ENCODE measurements at regions of chr17 and their contacts with region 1.

Region 1: DNA sequence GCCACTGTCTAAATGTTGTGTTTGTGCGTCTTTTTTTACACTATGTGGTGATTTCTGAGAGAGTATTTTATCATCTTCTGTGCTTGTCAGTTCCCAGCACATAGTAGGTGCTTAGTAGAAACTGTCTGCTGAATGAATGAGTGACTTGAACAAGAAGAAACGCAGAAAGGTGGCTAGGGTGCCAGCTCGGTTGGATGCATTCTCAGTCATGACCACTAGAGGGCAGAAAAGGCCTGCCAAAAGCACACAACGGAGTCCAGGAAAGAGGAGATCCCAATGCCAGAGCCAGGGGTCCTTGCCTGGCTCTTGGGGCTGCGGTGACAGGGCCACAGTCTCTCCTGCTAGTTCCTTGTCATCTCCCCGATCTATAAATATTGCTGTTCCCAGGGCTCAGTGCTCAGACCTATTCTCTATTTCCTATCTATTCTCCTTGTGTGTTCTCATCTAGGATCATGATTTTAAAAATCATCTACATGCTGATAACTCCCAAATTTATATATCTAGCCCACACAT is 57.3 kb upstream of the CCL1 start:
- DNase-seq: peak; percentile 73
- H3K4me3 Mint-ChIP-seq: no peak overlapping the region
- H3K27ac Mint-ChIP-seq: no peak overlapping the region
- H3K4me1 Mint-ChIP-seq: peaks cover 3% of the 10 kb centered on the region
- H3K27me3 Mint-ChIP-seq: peaks cover 25% of the 10 kb centered on the region

Region 2: DNA sequence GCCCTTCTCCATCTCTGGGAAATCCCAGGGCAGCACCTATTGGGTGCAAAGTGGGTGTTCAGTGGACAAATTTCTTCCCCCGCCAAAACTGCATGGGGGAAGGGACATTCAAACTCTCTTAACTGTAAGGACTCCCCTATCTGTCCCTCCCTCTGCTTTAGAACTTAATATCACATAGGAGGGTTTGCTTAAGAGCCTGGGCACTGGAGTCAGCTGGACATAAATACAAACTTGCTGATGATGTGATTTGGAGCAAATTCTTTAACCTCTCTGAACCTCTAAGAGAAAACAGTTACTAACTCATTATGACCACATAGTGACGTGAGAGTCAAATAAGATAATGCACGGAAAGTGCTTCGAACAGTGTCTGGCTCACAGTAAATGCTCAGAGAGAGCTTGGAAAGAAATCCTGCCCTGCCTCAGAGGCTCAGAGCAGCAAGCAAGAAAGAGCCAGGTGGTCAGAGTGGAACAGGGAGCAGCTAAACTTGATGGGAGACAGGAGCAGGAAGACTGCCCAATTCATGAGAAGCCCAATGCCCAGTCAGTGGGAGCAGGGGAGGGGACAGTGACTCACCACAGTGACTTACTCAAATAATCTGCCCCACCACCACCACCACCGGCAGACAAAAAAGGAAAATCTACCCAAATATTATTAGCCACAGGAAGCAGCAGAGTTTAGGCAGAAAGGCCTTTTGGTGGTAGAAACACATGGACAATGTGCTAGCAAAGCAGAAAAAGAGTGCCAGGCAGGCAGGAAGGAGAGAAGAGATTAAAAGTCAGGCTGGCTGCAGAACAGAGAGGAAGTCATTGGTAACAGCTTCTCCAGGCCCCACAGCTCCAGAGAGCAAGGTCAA is 33.4 kb before region 1 on chr17:
- CTCF ChIA-PET with region 1: interaction called, 10 read pairs
- POLR2A ChIA-PET with region 1: no interaction called
- intact Hi-C with region 1: no loop called
- DNase-seq: no peak
- H3K4me3 Mint-ChIP-seq: no peak overlapping the region
- H3K27ac Mint-ChIP-seq: no peak overlapping the region
- H3K4me1 Mint-ChIP-seq: peaks cover 19% of the 10 kb centered on the region
- H3K27me3 Mint-ChIP-seq: peaks cover 29% of the 10 kb centered on the region

Region 3: GRCh38 chr17:34637548-34638525 is 217.5 kb after region 1 on chr17:
- CTCF ChIA-PET with region 1: interaction called, 14 read pairs
- POLR2A ChIA-PET with region 1: no interaction called
- intact Hi-C with region 1: loop called (anchors 5 kb)
- DNase-seq: peak; percentile 87
- H3K4me3 Mint-ChIP-seq: peak overlapping the region; percentile 61
- H3K27ac Mint-ChIP-seq: no peak overlapping the region
- H3K4me1 Mint-ChIP-seq: peaks cover 8% of the 10 kb centered on the region
- H3K27me3 Mint-ChIP-seq: peaks cover 8% of the 10 kb centered on the region

Region 4: DNA sequence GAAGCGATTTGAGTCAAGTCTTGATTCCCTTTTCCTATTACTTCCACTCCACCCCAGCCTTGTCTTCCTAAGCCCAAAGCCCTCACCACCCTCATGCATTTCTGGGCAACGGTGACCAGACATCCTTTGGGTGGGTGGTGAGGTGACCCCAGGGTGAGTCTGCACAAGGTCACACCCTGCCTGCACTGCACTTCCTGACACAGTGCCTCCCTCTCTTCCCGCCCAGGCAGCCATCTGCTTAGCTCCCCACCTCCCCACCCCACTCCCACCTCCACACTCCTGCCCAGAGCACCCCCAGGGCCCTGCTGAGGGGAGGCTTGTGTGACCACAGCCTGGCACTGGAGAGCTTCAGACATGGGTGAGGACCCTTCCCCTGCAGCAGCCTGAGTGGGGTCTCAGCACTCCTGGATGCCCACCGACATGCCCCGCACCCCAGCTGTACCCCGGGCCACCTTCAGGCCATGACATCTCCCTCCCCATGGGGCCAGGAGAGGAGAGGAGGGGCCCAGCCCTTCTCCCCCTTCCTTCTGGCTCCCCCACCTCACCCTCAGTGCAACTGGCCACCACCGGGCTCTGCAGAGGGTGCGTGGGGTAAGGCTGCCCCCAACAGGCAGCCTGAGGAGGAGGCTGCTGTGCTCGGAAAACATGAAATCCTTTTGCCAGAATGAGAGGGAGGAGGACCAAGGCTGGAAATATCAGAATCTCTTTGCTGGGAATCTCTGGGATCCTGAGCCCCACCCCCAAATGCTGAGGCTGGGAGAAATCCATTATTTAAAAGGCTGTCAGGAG is 472.3 kb after region 1 on chr17:
- CTCF ChIA-PET with region 1: interaction called, 3 read pairs
- POLR2A ChIA-PET with region 1: no interaction called
- intact Hi-C with region 1: loop called (anchors 10 kb)
- DNase-seq: peak; percentile 37
- H3K4me3 Mint-ChIP-seq: no peak overlapping the region
- H3K27ac Mint-ChIP-seq: no peak overlapping the region
- H3K4me1 Mint-ChIP-seq: no peaks in the 10 kb centered on the region
- H3K27me3 Mint-ChIP-seq: peaks cover 22% of the 10 kb centered on the region

Measured in activated CD4-positive, alpha-beta memory T cell treated with anti-CD3 and anti-CD28 coated beads for 36 hours (primary cell).